IMR-90 (cell line): ENCODE measurements at regions of chr13 and their contacts with region 1.

Region 1: GRCh38 chr13:22278336-22278929 is 607.6 kb downstream of the FGF9 start:
- DNase-seq: peak; percentile 63
- ATAC-seq: peak; percentile 81
- H3K4me3 ChIP-seq: no peak overlapping the region
- H3K27ac ChIP-seq: no peak overlapping the region
- H3K4me1 ChIP-seq: no peaks in the 10 kb centered on the region; the same call in 1 of the 2 replicates
- H3K27me3 ChIP-seq: no peaks in the 10 kb centered on the region; the same call in 1 of the 2 replicates
- CTCF ChIP-seq: peak; percentile 69
- POLR2A ChIP-seq: no peak
- RAD21 ChIP-seq: peak; percentile 78

Region 2: DNA sequence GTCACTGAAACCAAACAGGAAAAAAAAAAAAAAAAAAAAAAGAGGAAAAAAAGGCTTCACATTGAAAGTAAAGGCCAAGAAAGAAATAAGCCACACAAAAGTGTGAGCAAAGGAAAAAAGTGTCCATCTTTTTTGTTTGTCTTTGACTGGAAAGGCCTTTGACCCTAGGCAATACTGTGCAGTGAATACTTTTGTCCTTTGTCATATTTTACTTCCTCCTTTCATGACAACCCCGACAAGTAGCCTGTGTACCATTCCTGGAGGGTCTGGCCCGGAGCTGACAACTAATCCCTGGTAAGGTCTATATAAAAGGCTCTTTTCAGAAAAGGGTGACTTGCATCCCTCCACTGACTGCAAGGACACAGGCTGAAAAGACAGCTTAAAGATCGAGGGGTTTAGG is 661.6 kb before region 1 on chr13:
- CTCF ChIA-PET with region 1: no interaction called
- POLR2A ChIA-PET with region 1: no interaction called
- dilution Hi-C with region 1: no loop called
- in situ Hi-C with region 1: loop called (anchors 5 kb)
- intact Hi-C with region 1: no loop called
- DNase-seq: no peak
- ATAC-seq: no peak
- H3K4me3 ChIP-seq: no peak overlapping the region
- H3K27ac ChIP-seq: no peak overlapping the region
- H3K4me1 ChIP-seq: peaks cover 3% of the 10 kb centered on the region
- H3K27me3 ChIP-seq: peaks cover 16% of the 10 kb centered on the region
- CTCF ChIP-seq: no peak
- POLR2A ChIP-seq: no peak
- RAD21 ChIP-seq: no peak

Region 3: DNA sequence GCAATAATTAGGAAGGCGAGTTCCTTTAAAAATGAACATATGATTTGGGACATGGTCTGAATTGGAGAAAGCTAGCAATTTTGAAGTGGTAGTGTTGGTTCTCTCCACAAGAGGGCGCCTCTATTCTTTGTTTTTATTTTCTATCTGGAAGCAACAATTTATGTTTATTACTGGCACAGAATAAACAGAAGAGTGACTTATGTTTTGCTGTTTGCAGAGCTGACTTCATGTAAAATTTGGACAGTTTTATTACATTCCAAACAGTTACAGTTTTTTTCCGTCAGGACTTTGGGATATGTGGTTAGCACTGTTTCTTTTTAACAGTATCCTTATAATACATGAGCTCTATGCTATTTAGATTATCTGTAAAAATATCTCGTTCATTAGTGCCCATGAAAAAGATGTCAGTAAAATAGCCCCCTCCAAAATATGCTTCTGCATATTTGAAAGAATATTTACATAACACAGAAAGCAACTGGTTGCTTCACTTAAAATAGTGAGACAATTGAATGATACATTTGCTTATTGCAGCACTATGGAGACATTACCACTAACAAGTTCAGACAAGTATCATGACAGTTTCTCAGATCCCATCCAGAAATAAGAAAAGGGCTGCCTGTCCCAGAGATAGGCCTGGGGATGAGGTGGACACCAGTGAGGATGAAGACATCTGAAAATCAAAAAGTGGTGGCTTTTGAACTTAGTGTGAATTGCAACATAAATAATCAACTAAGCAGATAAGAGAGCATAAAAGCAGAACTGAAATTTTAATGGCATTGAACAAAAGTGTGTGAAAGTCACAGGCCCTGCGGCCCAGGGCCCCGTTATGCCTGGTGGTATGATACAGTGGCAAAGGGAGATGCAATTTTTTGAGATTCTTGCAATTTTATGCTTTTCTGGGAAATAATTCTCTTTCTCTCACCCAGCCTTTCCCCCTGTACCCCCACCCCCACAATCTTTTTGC is 639.8 kb before region 1 on chr13:
- CTCF ChIA-PET with region 1: interaction called, 5 read pairs
- POLR2A ChIA-PET with region 1: no interaction called
- dilution Hi-C with region 1: no loop called
- in situ Hi-C with region 1: no loop called
- intact Hi-C with region 1: loop called (anchors 1 kb)
- DNase-seq: peak; percentile 4
- ATAC-seq: peak; percentile 53
- H3K4me3 ChIP-seq: no peak overlapping the region
- H3K27ac ChIP-seq: no peak overlapping the region; the same call in 1 of the 2 replicates
- H3K4me1 ChIP-seq: peaks cover 3% of the 10 kb centered on the region; the same call in 1 of the 2 replicates
- H3K27me3 ChIP-seq: peaks cover 2% of the 10 kb centered on the region
- CTCF ChIP-seq: peak; percentile 69
- POLR2A ChIP-seq: no peak
- RAD21 ChIP-seq: peak; percentile 72

Region 4: DNA sequence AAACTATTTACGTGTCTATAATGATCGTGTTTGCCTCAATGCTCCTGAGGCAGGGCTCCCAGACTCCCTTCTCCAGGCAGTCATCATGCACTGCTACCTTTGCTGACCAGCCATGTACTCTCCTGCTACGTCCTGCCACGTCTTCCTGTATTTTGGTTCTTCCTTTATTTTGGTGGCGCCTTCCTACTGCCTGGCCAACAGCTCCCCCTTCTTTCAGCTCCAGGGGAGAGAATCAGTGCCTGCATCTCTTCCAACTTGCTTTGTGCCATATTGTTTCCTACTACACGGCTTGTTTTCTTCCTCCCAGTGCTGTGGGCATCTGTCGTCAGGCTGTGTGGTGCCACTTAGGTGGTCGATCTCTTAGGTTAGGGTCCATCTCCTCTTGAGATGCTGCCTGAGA is 511.4 kb before region 1 on chr13:
- CTCF ChIA-PET with region 1: no interaction called
- POLR2A ChIA-PET with region 1: no interaction called
- dilution Hi-C with region 1: no loop called
- in situ Hi-C with region 1: no loop called
- intact Hi-C with region 1: loop called (anchors 10 kb)
- DNase-seq: no peak
- ATAC-seq: no peak
- H3K4me3 ChIP-seq: no peak overlapping the region
- H3K27ac ChIP-seq: no peak overlapping the region
- H3K4me1 ChIP-seq: no peaks in the 10 kb centered on the region
- H3K27me3 ChIP-seq: peaks cover 2% of the 10 kb centered on the region; the same call in 1 of the 2 replicates
- CTCF ChIP-seq: no peak
- POLR2A ChIP-seq: no peak
- RAD21 ChIP-seq: no peak

Region 5: GRCh38 chr13:21913010-21913409 is 365.4 kb before region 1 on chr13:
- CTCF ChIA-PET with region 1: no interaction called
- POLR2A ChIA-PET with region 1: no interaction called
- dilution Hi-C with region 1: no loop called
- in situ Hi-C with region 1: no loop called
- intact Hi-C with region 1: loop called (anchors 5 kb)
- DNase-seq: peak; percentile 19
- ATAC-seq: no peak; the same call in 1 of the 2 replicates
- H3K4me3 ChIP-seq: no peak overlapping the region
- H3K27ac ChIP-seq: no peak overlapping the region
- H3K4me1 ChIP-seq: no peaks in the 10 kb centered on the region; the same call in 1 of the 2 replicates
- H3K27me3 ChIP-seq: no peaks in the 10 kb centered on the region; the same call in 1 of the 2 replicates
- CTCF ChIP-seq: peak; percentile 40
- POLR2A ChIP-seq: no peak
- RAD21 ChIP-seq: peak; percentile 44

Region 6: GRCh38 chr13:22073718-22074117 is 204.7 kb before region 1 on chr13:
- CTCF ChIA-PET with region 1: no interaction called
- POLR2A ChIA-PET with region 1: no interaction called
- dilution Hi-C with region 1: no loop called
- in situ Hi-C with region 1: no loop called
- intact Hi-C with region 1: loop called (anchors 10 kb)
- DNase-seq: no peak
- ATAC-seq: no peak
- H3K4me3 ChIP-seq: no peak overlapping the region
- H3K27ac ChIP-seq: no peak overlapping the region
- H3K4me1 ChIP-seq: peaks cover 3% of the 10 kb centered on the region; the same call in 1 of the 2 replicates
- H3K27me3 ChIP-seq: no peaks in the 10 kb centered on the region; the same call in none of the 2 replicates
- CTCF ChIP-seq: no peak
- POLR2A ChIP-seq: no peak
- RAD21 ChIP-seq: no peak